H1 (cell line): ENCODE measurements at regions of chr1 and their contacts with region 1.

Region 1: DNA sequence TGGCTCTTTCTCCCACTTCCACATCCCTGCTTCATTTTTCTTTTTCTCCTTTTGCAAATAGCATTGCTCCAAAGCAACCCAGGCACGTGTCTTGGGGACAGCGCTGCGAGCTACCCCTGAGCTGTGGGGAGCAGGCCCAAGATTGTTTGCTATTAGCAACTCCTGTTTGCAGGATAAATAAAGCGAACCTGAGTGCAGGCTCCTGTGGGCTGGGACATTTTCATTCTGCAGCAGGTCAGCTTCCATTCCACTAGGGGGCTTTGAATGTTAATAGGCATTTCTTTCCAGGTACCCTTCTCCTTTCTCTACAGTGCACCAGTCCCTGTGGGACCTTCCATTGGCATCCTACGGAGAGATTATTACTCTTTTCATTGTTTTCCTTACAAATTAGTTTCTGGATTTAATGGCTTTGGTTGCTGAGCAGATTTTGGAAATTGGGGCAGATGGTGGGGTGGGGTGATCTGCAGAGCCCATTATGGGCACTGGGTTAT is 54.0 kb downstream of the OLFML3 start:
- DNase-seq: peak in 1 of 2 experiments; percentile 63
- H3K4me3 ChIP-seq: peak overlapping the region; percentile 37 to 59 (median 51)
- H3K27ac ChIP-seq: peak overlapping the region; percentile 66
- H3K4me1 ChIP-seq: peaks cover 3 to 36% (median 25%) of the 10 kb centered on the region in 4 experiments
- H3K27me3 ChIP-seq: no peaks in the 10 kb centered on the region
- CTCF ChIP-seq: peak; percentile 33 to 82 (median 69)
- EP300 ChIP-seq: 0 out of 3 replicates have a peak, but pooled peaks of 1 of the 2 experiments have one; percentile 16
- POLR2A ChIP-seq: no peak; a peak in 1 of 3 replicates
- RAD21 ChIP-seq: peak; percentile 63 to 66

Region 2: GRCh38 chr1:114002492-114003239 is 30.6 kb before region 1 on chr1:
- CTCF ChIA-PET with region 1: interaction called, 5 read pairs
- POLR2A ChIA-PET with region 1: interaction called, 14 read pairs
- DNase-seq: no peak
- H3K4me3 ChIP-seq: no peak overlapping the region
- H3K27ac ChIP-seq: no peak overlapping the region; the same call in 1 of the 2 replicates
- H3K4me1 ChIP-seq: peaks cover 7 to 16% (median 12%) of the 10 kb centered on the region in 4 experiments
- H3K27me3 ChIP-seq: no peaks in the 10 kb centered on the region
- CTCF ChIP-seq: no peak
- EP300 ChIP-seq: no peak
- POLR2A ChIP-seq: no peak
- RAD21 ChIP-seq: no peak

Region 3: DNA sequence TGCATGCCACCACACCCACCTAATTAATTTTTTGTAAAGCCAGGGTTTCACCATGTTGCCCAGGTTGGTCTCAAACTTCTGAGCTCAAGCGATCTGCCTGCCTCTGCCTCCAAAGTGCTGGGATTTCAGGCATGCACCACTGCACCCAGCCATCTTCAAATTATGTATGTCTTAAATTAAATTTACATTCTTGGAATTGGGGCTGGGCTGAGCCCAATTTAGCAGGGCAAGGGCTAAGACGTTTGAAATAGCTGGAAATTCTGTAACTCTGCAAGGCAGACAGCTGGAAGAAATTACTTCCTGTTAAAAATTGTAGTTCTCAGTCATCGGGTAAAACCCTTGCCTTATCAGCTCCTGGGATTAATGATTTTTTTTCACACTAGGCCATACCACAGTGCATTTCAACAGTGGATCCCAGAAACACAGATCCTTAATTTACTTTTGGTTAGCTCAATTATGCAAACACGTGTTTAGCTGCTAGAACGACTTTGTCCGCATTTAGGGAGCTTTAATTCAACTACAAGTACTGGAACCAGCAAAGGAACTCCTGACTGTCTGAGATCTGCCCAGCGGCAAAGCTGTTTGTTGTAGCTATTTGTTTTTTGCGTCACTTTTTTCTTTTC is 29.3 kb after region 1 on chr1:
- CTCF ChIA-PET with region 1: interaction called, 14 read pairs
- POLR2A ChIA-PET with region 1: interaction called, 5 read pairs
- DNase-seq: no peak
- H3K4me3 ChIP-seq: no peak overlapping the region
- H3K27ac ChIP-seq: no peak overlapping the region
- H3K4me1 ChIP-seq: no peaks in the 10 kb centered on the region
- H3K27me3 ChIP-seq: no peaks in the 10 kb centered on the region; a peak in 1 of 7 replicates
- CTCF ChIP-seq: no peak
- EP300 ChIP-seq: no peak
- POLR2A ChIP-seq: no peak
- RAD21 ChIP-seq: no peak

Region 4: GRCh38 chr1:114088392-114089299 is 55.4 kb after region 1 on chr1:
- CTCF ChIA-PET with region 1: interaction called, 9 read pairs
- POLR2A ChIA-PET with region 1: interaction called, 21 read pairs
- DNase-seq: no peak
- H3K4me3 ChIP-seq: no peak overlapping the region
- H3K27ac ChIP-seq: 0 out of 2 replicates have a peak overlapping the region, but pooled peaks have one; percentile 17
- H3K4me1 ChIP-seq: peaks cover 7 to 23% (median 11%) of the 10 kb centered on the region in 4 experiments; a peak in 6 of 7 replicates
- H3K27me3 ChIP-seq: no peaks in the 10 kb centered on the region
- CTCF ChIP-seq: peak in 2 of 3 experiments; percentile 1 to 12; a peak in 2 of 4 replicates
- EP300 ChIP-seq: peak in 1 of 2 experiments; percentile 39; a peak in 1 of 3 replicates
- POLR2A ChIP-seq: peak in 1 of 2 experiments; percentile 47; a peak in 1 of 3 replicates
- RAD21 ChIP-seq: peak in 1 of 2 experiments; percentile 34; a peak in 1 of 4 replicates

Region 5: GRCh38 chr1:114282751-114283403 is 249.6 kb after region 1 on chr1:
- CTCF ChIA-PET with region 1: interaction called, 10 read pairs
- POLR2A ChIA-PET with region 1: no interaction called
- DNase-seq: peak; percentile 70 to 93
- H3K4me3 ChIP-seq: no peak overlapping the region
- H3K27ac ChIP-seq: no peak overlapping the region
- H3K4me1 ChIP-seq: peaks cover 0 to 9% (median 2%) of the 10 kb centered on the region in 4 experiments; a peak in 3 of 7 replicates
- H3K27me3 ChIP-seq: no peaks in the 10 kb centered on the region
- CTCF ChIP-seq: peak; percentile 86 to 95 (median 93)
- EP300 ChIP-seq: no peak
- POLR2A ChIP-seq: no peak
- RAD21 ChIP-seq: peak; percentile 90 to 95